ENCODE measurements at regions of chr19 and their contacts with region 1.

Region 1: DNA sequence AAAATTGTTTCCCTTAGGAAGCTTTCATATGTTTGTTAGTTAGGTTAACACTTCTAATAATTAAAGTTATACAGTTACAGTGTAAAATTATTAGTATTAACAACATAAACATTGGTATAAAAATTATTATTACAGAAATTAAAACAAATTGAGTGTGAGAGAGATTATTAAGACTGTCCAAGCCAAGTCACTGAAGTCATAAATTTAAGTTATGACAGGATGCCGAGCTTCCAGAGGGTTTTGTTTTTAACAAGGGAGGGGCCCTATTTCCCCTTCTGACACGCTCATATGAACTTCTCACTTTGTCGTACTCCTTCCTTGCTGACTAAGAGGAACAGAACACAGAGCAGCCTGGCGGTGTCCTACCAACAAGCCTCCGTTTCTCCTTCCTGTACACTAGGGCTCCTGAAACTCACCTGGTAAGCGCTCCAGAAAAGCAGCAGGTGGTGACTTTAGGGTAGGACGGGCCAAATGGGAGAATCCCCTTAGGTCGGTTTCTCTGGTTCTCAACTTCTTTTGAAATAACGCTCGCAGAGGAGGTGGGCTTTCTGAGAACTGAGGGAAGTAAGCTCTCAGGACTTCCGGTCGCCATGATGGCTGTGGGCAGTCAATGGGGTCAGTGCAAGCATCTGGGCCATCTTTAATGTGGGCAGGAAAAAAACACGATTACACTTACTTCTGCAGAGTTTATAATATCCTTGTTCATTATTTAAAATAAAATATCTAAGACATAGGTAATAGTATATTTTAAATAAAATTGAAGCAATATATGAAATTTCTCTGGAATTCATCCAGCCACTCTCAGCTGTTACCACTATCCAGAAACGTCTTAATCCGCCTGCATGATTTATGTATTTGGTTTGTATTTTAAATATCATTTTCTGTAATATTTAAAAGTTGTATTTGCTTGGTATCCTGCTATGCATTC is at the start of gene CARD8:
- DNase-seq: peak; percentile 58 to 93 (median 83)
- ATAC-seq: peak; percentile 87
- H3K4me3 ChIP-seq: peak within 1 kb of the TSS; percentile 78 to 89
- H3K4me3 Mint-ChIP-seq: peak within 1 kb of the TSS; percentile 96
- H3K27ac ChIP-seq: peak within 1 kb of the TSS; percentile 84 to 94
- H3K27ac Mint-ChIP-seq: peak within 1 kb of the TSS; percentile 97
- H3K4me1 ChIP-seq: peaks cover 69% of the 10 kb centered on the region
- H3K4me1 Mint-ChIP-seq: peaks cover 75% of the 10 kb centered on the region
- H3K27me3 ChIP-seq: no peaks in the 10 kb centered on the region
- H3K27me3 Mint-ChIP-seq: no peaks in the 10 kb centered on the region
- CTCF ChIP-seq: no peak
- total RNA-seq, gene CARD8: 58.8 to 69.1 TPM

Region 2: DNA sequence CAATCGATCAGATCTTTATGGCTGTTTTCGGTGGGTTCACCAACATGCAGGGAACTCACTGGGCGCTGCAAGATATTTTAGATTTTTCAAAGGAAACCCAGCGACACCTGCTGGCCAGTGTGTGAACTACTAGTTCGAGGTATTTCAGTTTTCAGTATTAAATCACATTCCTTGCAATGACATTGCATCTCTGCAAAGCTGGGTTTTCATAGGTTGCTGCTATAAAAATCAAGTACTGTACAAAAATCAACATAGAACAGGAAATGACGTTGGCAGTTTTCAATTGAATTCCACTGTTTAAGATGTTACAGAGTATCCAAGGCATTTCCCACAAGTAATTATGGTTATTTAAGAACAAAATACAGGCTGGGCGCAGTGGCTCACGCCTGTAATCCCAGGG is 103.1 kb before region 1 on chr19:
- CTCF ChIA-PET with region 1: interaction called, 4 read pairs
- POLR2A ChIA-PET with region 1: interaction called, 3 read pairs
- intact Hi-C with region 1: loop called in 1 of 2 experiments (anchors 1 kb)
- DNase-seq: peak; percentile 36 to 81 (median 61)
- ATAC-seq: peak; percentile 72
- H3K4me3 ChIP-seq: no peak overlapping the region
- H3K4me3 Mint-ChIP-seq: no peak overlapping the region
- H3K27ac ChIP-seq: no peak overlapping the region
- H3K27ac Mint-ChIP-seq: no peak overlapping the region
- H3K4me1 ChIP-seq: no peaks in the 10 kb centered on the region
- H3K4me1 Mint-ChIP-seq: no peaks in the 10 kb centered on the region
- H3K27me3 ChIP-seq: no peaks in the 10 kb centered on the region
- H3K27me3 Mint-ChIP-seq: no peaks in the 10 kb centered on the region
- CTCF ChIP-seq: peak; percentile 88

Region 3: GRCh38 chr19:48190288-48190884 is 65.3 kb before region 1 on chr19:
- CTCF ChIA-PET with region 1: interaction called, 6 read pairs
- POLR2A ChIA-PET with region 1: no interaction called
- intact Hi-C with region 1: loop called (anchors 1 kb)
- DNase-seq: peak in 7 of 9 experiments; percentile 16 to 84 (median 68)
- ATAC-seq: peak; percentile 94
- H3K4me3 ChIP-seq: no peak overlapping the region
- H3K4me3 Mint-ChIP-seq: no peak overlapping the region
- H3K27ac ChIP-seq: no peak overlapping the region
- H3K27ac Mint-ChIP-seq: peak overlapping the region; percentile 64
- H3K4me1 ChIP-seq: no peaks in the 10 kb centered on the region
- H3K4me1 Mint-ChIP-seq: peaks cover 12% of the 10 kb centered on the region
- H3K27me3 ChIP-seq: no peaks in the 10 kb centered on the region
- H3K27me3 Mint-ChIP-seq: no peaks in the 10 kb centered on the region
- CTCF ChIP-seq: no peak

Region 4: DNA sequence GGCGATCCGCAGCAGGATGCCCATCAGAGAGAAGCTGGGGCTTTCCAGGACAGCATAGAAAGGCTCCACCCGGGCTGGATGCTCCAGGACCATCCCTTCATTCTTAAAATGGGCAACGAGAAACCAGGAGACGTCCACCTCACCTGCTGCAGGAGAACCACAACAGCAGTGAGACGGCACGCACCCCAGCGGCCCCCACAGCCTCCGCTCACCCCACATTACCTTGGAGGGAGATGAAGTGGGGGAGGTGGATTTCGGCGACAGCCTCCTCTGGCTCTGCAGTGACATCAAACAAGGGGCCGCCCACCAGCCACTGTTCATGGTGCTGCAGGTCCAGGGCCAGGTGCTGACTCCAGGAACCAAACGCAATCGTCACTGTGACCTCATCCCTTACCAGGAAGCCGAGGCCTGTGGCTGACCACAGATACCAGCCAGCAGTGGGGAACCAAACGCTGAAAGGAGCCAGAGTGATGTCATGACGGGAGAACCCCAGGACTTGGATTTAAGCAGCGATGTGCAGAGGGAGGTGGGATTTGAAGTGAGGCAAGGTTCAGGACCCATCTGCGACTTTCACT is 25.0 kb before region 1 on chr19:
- CTCF ChIA-PET with region 1: interaction called, 5 read pairs
- POLR2A ChIA-PET with region 1: interaction called, 3 read pairs
- intact Hi-C with region 1: loop called in 1 of 2 experiments (anchors 5 kb)
- DNase-seq: peak in 4 of 9 experiments; percentile 8 to 52 (median 36)
- ATAC-seq: peak; percentile 36
- H3K4me3 ChIP-seq: no peak overlapping the region
- H3K4me3 Mint-ChIP-seq: no peak overlapping the region
- H3K27ac ChIP-seq: no peak overlapping the region
- H3K27ac Mint-ChIP-seq: no peak overlapping the region
- H3K4me1 ChIP-seq: no peaks in the 10 kb centered on the region
- H3K4me1 Mint-ChIP-seq: peaks cover 8% of the 10 kb centered on the region
- H3K27me3 ChIP-seq: no peaks in the 10 kb centered on the region
- H3K27me3 Mint-ChIP-seq: no peaks in the 10 kb centered on the region
- CTCF ChIP-seq: no peak

Region 5: DNA sequence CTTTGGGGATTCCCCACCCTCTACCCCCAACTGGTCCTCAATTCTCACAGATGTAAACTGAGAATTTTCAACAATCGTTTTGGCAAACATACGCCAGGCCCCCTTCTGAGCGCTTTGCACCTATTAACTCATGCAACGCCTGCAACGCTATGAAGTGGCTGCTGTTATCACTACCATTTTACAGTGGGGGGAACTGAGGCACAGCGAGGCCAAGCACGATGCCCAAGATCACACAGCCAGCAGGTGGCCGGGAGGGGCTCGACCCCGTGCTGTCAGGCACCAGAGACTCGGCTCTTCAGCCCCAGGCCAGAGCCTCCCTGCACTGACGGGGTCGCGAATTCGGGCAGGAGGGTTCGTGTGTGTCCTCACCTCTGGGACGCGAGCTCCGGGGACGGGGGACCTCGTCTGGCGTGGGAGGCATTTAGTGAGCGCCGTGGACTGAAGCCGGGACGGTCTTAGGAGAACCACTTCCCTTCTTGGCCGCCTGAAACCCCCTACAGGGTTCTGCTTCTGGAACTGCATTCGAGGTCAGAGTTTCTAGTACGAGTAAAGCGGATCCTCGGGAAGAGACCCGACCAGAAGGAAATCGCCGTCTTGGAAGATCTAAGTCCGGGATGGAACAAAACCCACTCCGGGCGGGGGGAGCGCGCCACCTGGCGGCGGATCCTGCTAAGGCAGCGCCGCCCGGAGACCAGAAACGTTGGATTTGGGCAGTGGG is 35.3 kb after region 1 on chr19:
- CTCF ChIA-PET with region 1: interaction called, 10 read pairs
- POLR2A ChIA-PET with region 1: no interaction called
- intact Hi-C with region 1: no loop called
- DNase-seq: peak; percentile 30 to 83 (median 66)
- ATAC-seq: peak; percentile 52
- H3K4me3 ChIP-seq: peak overlapping the region; percentile 42 to 82
- H3K4me3 Mint-ChIP-seq: peak overlapping the region; percentile 78
- H3K27ac ChIP-seq: no peak overlapping the region
- H3K27ac Mint-ChIP-seq: no peak overlapping the region
- H3K4me1 ChIP-seq: peaks cover 5% of the 10 kb centered on the region
- H3K4me1 Mint-ChIP-seq: peaks cover 8% of the 10 kb centered on the region
- H3K27me3 ChIP-seq: no peaks in the 10 kb centered on the region
- H3K27me3 Mint-ChIP-seq: peaks cover 9% of the 10 kb centered on the region
- CTCF ChIP-seq: peak; percentile 94

Measured in CD8-positive, alpha-beta T cell (primary cell).